Breast epithelium (tissue), 4 donors: ENCODE measurements at regions of chr17 and their contacts with region 1.

Region 1: DNA sequence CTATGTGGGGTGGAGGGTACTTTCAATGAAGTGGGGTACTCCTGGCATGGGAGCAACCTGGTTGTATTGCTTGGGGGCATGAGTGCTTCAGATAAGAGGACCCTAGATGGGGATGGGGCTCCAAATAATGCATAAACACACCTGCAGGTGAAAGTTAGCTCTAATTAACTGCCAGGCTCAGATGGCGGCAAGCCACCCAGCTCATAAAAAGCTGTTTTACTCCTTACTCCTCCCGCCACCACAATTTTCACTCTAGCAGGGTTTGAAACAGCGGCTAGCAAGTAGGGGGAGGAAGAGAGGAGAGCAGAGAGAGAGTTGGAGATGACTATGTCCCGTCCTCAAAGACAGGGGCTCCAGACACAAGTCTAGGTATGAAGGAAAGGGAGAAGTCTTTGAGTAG is 117.7 kb upstream of the WSCD1 start:
- DNase-seq: no peak
- H3K4me3 ChIP-seq: no peak overlapping the region
- H3K27ac ChIP-seq: no peak overlapping the region
- H3K4me1 ChIP-seq: no peaks in the 10 kb centered on the region
- H3K27me3 ChIP-seq: peaks cover 0 to 37% of the 10 kb centered on the region in 2 donors
- CTCF ChIP-seq: no peak
- POLR2A ChIP-seq: no peak

Region 2: GRCh38 chr17:5877948-5878347 is 74.6 kb before region 1 on chr17:
- intact Hi-C with region 1: no loop called
- DNase-seq: no peak
- H3K4me3 ChIP-seq: no peak overlapping the region
- H3K27ac ChIP-seq: no peak overlapping the region
- H3K4me1 ChIP-seq: no peaks in the 10 kb centered on the region
- H3K27me3 ChIP-seq: no peaks in the 10 kb centered on the region
- CTCF ChIP-seq: no peak
- POLR2A ChIP-seq: no peak

Region 3: GRCh38 chr17:5921512-5922282 is 30.8 kb before region 1 on chr17:
- intact Hi-C with region 1: loop called (anchors 1 kb)
- DNase-seq: no peak
- H3K4me3 ChIP-seq: no peak overlapping the region
- H3K27ac ChIP-seq: no peak overlapping the region
- H3K4me1 ChIP-seq: no peaks in the 10 kb centered on the region
- H3K27me3 ChIP-seq: peaks cover 0 to 5% of the 10 kb centered on the region in 2 donors
- CTCF ChIP-seq: no peak
- POLR2A ChIP-seq: no peak

Region 4: GRCh38 chr17:5986644-5987043 is 34.1 kb after region 1 on chr17:
- intact Hi-C with region 1: no loop called
- DNase-seq: no peak
- H3K4me3 ChIP-seq: no peak overlapping the region
- H3K27ac ChIP-seq: no peak overlapping the region
- H3K4me1 ChIP-seq: no peaks in the 10 kb centered on the region
- H3K27me3 ChIP-seq: no peaks in the 10 kb centered on the region
- CTCF ChIP-seq: no peak
- POLR2A ChIP-seq: no peak